Body of pancreas (tissue), 4 donors: ENCODE measurements at regions of chr18 and their contacts with region 1.

Region 1: DNA sequence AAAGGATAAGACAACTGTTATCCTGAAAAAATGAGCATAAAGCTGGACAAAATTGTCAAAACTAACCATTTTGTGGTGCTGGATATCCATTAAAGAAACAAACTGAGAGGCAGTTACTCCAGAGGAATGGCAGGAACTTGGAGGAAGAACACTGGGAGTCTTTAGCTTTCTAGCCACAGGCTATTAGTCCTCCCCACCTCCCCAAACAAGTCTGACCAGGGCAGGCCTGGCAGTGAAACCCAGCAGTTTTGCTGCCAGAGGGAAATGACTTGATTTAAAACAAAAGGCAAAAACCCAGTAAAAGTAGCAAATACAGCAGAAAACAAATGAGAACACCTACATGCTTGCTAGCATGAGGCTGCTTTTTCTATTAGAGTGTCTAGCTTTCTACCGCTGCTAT is 34.9 kb downstream of the OSBPL1A start:
- DNase-seq: no peak
- ATAC-seq: no peak
- H3K4me3 ChIP-seq: no peak overlapping the region
- H3K27ac ChIP-seq: no peak overlapping the region
- H3K4me1 ChIP-seq: peaks cover 4% of the 10 kb centered on the region
- H3K27me3 ChIP-seq: no peaks in the 10 kb centered on the region
- CTCF ChIP-seq: no peak
- POLR2A ChIP-seq: no peak

Region 2: DNA sequence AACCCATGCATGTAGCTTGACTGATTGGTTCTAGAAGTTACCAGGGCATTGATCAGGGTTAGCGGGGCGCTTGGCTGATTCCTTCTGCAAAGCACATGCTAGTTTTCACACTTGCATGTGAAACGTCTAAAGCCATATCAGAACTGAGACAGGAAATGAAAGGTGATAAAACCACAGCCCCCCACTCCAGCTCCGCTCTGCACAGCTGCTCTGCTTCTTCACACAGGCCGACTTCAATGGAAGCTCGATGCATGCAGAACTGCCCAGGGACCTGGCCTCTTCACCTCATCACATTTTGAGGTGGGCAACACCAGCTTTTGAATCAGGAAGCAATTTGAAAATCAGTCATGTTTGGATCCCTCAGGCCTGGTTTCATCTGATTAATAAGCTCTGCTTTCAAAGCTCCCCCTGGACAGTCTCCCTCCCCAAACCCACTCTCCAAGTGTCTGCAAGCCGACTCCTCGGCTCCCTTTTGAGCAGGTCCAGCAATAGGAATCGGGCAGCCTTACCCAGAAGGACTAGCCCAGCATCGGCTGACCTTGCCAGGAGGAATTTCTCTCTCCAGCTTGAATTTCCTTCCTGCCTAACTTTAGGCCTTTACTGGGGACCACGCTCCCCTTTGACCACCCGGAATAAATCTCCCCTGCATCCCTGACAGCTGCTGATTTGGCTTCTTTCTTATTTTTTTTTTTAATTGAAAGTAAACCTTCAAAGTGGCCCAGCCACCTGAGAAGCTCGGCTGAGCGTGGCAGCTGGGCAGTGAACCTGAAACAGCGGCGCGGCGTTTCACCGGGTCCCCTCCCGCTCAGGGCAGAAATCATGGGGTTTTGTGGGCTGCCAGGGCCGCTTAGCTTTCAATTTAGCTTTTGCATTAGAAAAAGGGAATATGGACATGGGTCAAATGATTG is 129.4 kb after region 1 on chr18:
- intact Hi-C with region 1: loop called (anchors 5 kb)
- DNase-seq: no peak
- ATAC-seq: no peak
- H3K4me3 ChIP-seq: no peak overlapping the region
- H3K27ac ChIP-seq: no peak overlapping the region
- H3K4me1 ChIP-seq: no peaks in the 10 kb centered on the region
- H3K27me3 ChIP-seq: no peaks in the 10 kb centered on the region
- CTCF ChIP-seq: no peak
- POLR2A ChIP-seq: no peak

Region 3: GRCh38 chr18:24582771-24583170 is 220.0 kb after region 1 on chr18:
- intact Hi-C with region 1: no loop called
- DNase-seq: no peak
- ATAC-seq: no peak
- H3K4me3 ChIP-seq: no peak overlapping the region
- H3K27ac ChIP-seq: no peak overlapping the region
- H3K4me1 ChIP-seq: no peaks in the 10 kb centered on the region
- H3K27me3 ChIP-seq: peaks cover 0 to 3% of the 10 kb centered on the region in 2 donors
- CTCF ChIP-seq: no peak
- POLR2A ChIP-seq: no peak